Gastrocnemius medialis (tissue), 4 donors: ENCODE measurements at regions of chr16 and their contacts with region 1.

Region 1: DNA sequence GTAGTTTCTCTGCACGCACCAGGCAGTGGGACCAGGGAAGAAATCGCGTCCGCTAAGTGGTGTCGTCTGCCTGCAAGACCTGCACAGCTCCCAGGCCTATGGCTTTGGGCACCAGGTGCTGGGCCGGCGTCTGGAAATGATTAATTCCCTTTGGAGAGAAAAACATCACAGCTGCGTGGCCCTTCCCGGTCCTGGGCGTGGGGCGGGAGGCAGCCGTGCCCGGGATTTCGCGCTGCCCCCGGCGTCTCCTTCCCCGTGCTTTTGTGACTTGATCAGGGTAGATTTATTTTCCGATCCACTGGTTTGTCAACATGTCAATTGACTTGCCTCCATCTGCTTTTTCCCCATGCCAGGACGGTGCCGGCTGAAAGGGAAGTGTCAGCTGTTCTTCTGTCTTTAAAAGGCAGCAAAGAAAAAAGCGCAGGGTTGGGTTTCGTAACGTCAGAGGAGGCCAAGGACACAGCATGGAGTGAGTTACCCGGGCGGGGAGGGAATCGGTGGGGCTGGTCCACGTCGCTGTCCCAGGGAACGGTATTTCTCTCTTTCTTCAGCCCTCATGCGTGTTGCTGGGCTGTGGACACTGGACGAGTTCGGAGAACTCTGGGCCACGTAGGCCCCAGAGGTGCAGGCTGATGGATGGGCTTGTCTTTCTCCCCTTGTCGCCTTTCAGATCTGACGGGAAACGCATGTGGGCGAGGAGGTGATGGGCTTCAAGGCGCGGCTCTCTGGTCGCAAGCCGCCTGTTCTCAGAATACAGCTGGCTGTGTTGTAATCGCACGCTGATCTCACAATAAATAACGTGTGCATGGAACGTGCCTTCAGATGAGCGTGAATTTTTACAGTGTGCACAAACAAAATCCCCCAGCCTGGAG is 188.1 kb upstream of the ZNF469 start:
- DNase-seq: peak; percentile 60 to 72
- ATAC-seq: peak; percentile 83 to 92
- H3K4me3 ChIP-seq: peak overlapping the region; percentile 25 to 35 (median 34)
- H3K27ac ChIP-seq: peak overlapping the region; percentile 73 to 79 (median 76)
- H3K4me1 ChIP-seq: peaks cover 7 to 11% of the 10 kb centered on the region in 2 donors
- H3K27me3 ChIP-seq: no peaks in the 10 kb centered on the region
- CTCF ChIP-seq: peak in 3 of 5 experiments; percentile 2 to 35 (median 25)
- POLR2A ChIP-seq: no peak

Region 2: DNA sequence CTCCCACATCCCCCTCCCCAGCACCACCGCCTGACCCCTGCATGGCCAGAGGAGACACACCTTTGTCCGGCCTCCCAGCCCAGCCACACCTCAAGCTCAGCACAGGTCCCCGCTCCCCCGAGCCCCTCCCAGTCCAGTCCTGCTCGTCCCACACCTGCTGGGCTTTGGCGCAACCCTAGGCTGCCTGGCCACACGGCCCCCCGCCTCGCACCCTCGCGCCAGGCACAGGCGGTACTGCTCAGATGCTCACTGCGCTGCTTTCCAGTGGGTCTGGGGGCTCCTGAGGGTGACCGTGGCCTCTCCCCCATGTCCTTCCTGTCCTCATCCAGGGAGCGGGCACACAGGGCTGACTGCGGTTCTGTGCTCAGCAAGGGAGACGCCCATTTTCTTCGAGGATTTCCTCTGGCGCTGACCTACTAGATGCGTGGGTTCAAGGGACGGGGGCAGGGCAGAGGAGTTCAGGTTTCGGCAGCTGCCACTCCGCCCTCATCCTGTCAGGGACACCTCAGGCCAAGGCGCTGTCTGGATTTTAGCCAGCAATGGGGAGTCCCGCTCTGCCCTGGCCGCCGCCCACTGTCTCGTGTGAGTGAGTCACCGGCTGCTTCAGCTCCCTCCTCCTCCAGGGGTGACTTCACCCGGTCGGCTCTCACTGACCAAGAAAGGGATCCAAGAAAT is 70.1 kb after region 1 on chr16:
- in situ Hi-C with region 1: no loop called
- intact Hi-C with region 1: loop called (anchors 2 kb)
- DNase-seq: peak; percentile 96 to 99
- ATAC-seq: peak; percentile 88 to 92
- H3K4me3 ChIP-seq: peak overlapping the region in 1 of 4 donors; percentile 21
- H3K27ac ChIP-seq: peak overlapping the region in 3 of 4 donors; percentile 34 to 63 (median 44)
- H3K4me1 ChIP-seq: peaks cover 4 to 26% of the 10 kb centered on the region in 2 donors
- H3K27me3 ChIP-seq: no peaks in the 10 kb centered on the region
- CTCF ChIP-seq: no peak
- POLR2A ChIP-seq: no peak

Region 3: GRCh38 chr16:88383401-88384221 is 189.0 kb after region 1 on chr16:
- in situ Hi-C with region 1: no loop called
- intact Hi-C with region 1: loop called (anchors 1 kb)
- DNase-seq: peak in 1 of 2 donors; percentile 11
- ATAC-seq: peak; percentile 25 to 38
- H3K4me3 ChIP-seq: peak overlapping the region; percentile 23 to 48 (median 34)
- H3K27ac ChIP-seq: peak overlapping the region in 1 of 4 donors; percentile 55
- H3K4me1 ChIP-seq: peaks cover 5 to 29% of the 10 kb centered on the region in 2 donors
- H3K27me3 ChIP-seq: no peaks in the 10 kb centered on the region
- CTCF ChIP-seq: peak in 4 of 5 experiments; percentile 15 to 61 (median 49)
- POLR2A ChIP-seq: no peak

Region 4: GRCh38 chr16:88405216-88406060 is 210.8 kb after region 1 on chr16:
- in situ Hi-C with region 1: loop called in 2 of 4 experiments (anchors 25 kb)
- intact Hi-C with region 1: no loop called
- DNase-seq: no peak
- ATAC-seq: no peak
- H3K4me3 ChIP-seq: no peak overlapping the region
- H3K27ac ChIP-seq: no peak overlapping the region
- H3K4me1 ChIP-seq: no peaks in the 10 kb centered on the region
- H3K27me3 ChIP-seq: no peaks in the 10 kb centered on the region
- CTCF ChIP-seq: no peak
- POLR2A ChIP-seq: no peak

Region 5: GRCh38 chr16:88437373-88437964 is 242.8 kb after region 1 on chr16:
- in situ Hi-C with region 1: no loop called
- intact Hi-C with region 1: loop called (anchors 1 kb)
- DNase-seq: no peak
- ATAC-seq: peak in 1 of 2 donors; percentile 26
- H3K4me3 ChIP-seq: no peak overlapping the region
- H3K27ac ChIP-seq: no peak overlapping the region
- H3K4me1 ChIP-seq: no peaks in the 10 kb centered on the region
- H3K27me3 ChIP-seq: peaks cover 3 to 10% (median 10%) of the 10 kb centered on the region in 3 donors
- CTCF ChIP-seq: peak; percentile 77 to 93 (median 92)
- POLR2A ChIP-seq: no peak